Activated T-helper 2 cell treated with anti-CD3 and anti-CD28 coated beads, Interferon-gamma antibody, Interleukin-2, Interleukin-4, amounts not matched to agents 10 μg/mL and 5 μg/mL and 100 μg/mL, durations not matched to agents 14 hours and 24 hours and 36 hours (primary cell): ENCODE measurements at regions of chr2 and their contacts with region 1.

Region 1: GRCh38 chr2:55590810-55591440 is 26.5 kb downstream of the PPP4R3B start:
- DNase-seq: no peak
- H3K4me3 Mint-ChIP-seq: no peak overlapping the region
- H3K27ac Mint-ChIP-seq: peak overlapping the region; percentile 67
- H3K4me1 Mint-ChIP-seq: peaks cover 18% of the 10 kb centered on the region
- H3K27me3 Mint-ChIP-seq: no peaks in the 10 kb centered on the region

Region 2: GRCh38 chr2:55530539-55531081 is 60.3 kb before region 1 on chr2:
- intact Hi-C with region 1: loop called (anchors 5 kb)
- DNase-seq: peak; percentile 24
- H3K4me3 Mint-ChIP-seq: peak overlapping the region; percentile 20
- H3K27ac Mint-ChIP-seq: peak overlapping the region; percentile 92
- H3K4me1 Mint-ChIP-seq: peaks cover 19% of the 10 kb centered on the region
- H3K27me3 Mint-ChIP-seq: no peaks in the 10 kb centered on the region

Region 3: GRCh38 chr2:55604027-55604565 is 13.2 kb after region 1 on chr2:
- intact Hi-C with region 1: no loop called
- DNase-seq: no peak
- H3K4me3 Mint-ChIP-seq: no peak overlapping the region
- H3K27ac Mint-ChIP-seq: no peak overlapping the region
- H3K4me1 Mint-ChIP-seq: peaks cover 21% of the 10 kb centered on the region
- H3K27me3 Mint-ChIP-seq: no peaks in the 10 kb centered on the region